ENCODE measurements at regions of chr3 and their contacts with region 1.

Region 1: GRCh38 chr3:134794950-134795745 is at the start of gene EPHB1:
- DNase-seq: peak; percentile 39 to 53 (median 51)
- H3K4me3 ChIP-seq: peak within 1 kb of the TSS; percentile 21 to 84 (median 40)
- H3K4me3 Mint-ChIP-seq: peak within 1 kb of the TSS; percentile 91 to 99
- H3K27ac ChIP-seq: no peak within 1 kb of the TSS
- H3K27ac Mint-ChIP-seq: peak within 1 kb of the TSS in 1 of 7 donors; percentile 27
- H3K4me1 ChIP-seq: peaks cover 14 to 27% of the 10 kb centered on the region in 2 donors
- H3K4me1 Mint-ChIP-seq: peaks cover 26% of the 10 kb centered on the region
- H3K27me3 ChIP-seq: peaks cover 23 to 54% of the 10 kb centered on the region in 2 donors
- H3K27me3 Mint-ChIP-seq: peaks cover 43 to 63% (median 52%) of the 10 kb centered on the region in 3 donors
- CTCF ChIP-seq: peak; percentile 87
- polyA plus RNA-seq, gene EPHB1: 0.06 to 0.55 TPM in 2 of 3 donors, not detected in the other

Region 2: DNA sequence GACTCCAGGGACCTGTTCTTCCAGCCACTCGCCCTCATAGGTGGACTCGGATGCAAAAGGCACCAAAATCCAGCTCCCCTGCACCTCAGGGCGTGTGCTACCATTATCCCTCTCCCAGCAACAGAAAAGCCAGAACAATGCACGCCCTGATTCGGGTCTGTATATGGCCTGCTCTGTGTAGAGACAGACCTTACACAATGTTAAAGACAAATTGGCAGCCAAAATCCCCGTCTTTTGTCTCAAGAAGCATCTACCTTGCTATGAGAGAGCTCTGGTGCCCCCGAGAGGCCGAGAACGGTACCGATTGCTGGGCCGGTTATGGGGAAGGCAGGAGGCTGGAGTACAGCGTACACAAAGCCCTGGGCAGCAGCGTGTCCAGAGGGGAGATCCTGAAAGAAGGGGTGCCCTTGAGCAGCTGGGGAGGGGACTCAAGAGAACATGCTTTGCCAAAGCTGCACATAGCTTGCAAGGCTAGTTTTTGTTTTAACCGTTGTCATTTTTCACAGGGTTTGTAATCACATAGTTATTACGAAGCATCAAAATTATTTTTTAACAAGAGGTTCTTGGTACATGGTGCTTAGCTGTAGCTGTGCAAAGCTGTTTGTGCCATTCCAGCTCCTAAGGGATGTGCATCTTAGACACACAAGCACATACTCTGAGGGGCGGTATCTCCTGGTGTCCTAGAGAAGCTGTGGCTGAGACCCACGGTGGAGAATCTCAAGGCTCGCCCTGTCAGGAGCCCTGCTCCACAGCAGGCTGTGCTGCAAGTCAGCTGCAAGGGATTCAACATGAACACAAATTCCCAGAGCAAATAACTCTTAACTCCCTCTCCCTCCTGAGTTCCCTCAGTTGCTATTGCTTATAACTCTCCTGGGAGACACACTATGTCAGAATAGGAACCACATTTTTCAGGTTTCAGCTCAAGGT is 708.9 kb after region 1 on chr3:
- intact Hi-C with region 1: loop called in 1 of 2 experiments (anchors 10 kb)
- DNase-seq: peak in 1 of 3 donors; percentile 13
- H3K4me3 ChIP-seq: no peak overlapping the region
- H3K4me3 Mint-ChIP-seq: no peak overlapping the region
- H3K27ac ChIP-seq: no peak overlapping the region
- H3K27ac Mint-ChIP-seq: no peak overlapping the region
- H3K4me1 ChIP-seq: peaks cover 0 to 8% of the 10 kb centered on the region in 2 donors
- H3K4me1 Mint-ChIP-seq: peaks cover 13% of the 10 kb centered on the region
- H3K27me3 ChIP-seq: no peaks in the 10 kb centered on the region
- H3K27me3 Mint-ChIP-seq: peaks cover 2 to 7% (median 7%) of the 10 kb centered on the region in 3 donors
- CTCF ChIP-seq: no peak

Region 3: GRCh38 chr3:135895106-135895733 is 1100.1 kb after region 1 on chr3:
- intact Hi-C with region 1: loop called (anchors 5 to 10 kb)
- DNase-seq: peak; percentile 2 to 29 (median 20)
- H3K4me3 ChIP-seq: no peak overlapping the region
- H3K4me3 Mint-ChIP-seq: no peak overlapping the region
- H3K27ac ChIP-seq: no peak overlapping the region
- H3K27ac Mint-ChIP-seq: no peak overlapping the region
- H3K4me1 ChIP-seq: no peaks in the 10 kb centered on the region
- H3K4me1 Mint-ChIP-seq: no peaks in the 10 kb centered on the region
- H3K27me3 ChIP-seq: peaks cover 0 to 3% of the 10 kb centered on the region in 2 donors
- H3K27me3 Mint-ChIP-seq: peaks cover 2 to 7% (median 3%) of the 10 kb centered on the region in 3 donors
- CTCF ChIP-seq: peak; percentile 72

Measured in CD14-positive monocyte (primary cell).